Activated CD4-positive, alpha-beta T cell treated with anti-CD3 and anti-CD28 coated beads for 36 hours (primary cell): ENCODE measurements at regions of chr19 and their contacts with region 1.

Region 1: DNA sequence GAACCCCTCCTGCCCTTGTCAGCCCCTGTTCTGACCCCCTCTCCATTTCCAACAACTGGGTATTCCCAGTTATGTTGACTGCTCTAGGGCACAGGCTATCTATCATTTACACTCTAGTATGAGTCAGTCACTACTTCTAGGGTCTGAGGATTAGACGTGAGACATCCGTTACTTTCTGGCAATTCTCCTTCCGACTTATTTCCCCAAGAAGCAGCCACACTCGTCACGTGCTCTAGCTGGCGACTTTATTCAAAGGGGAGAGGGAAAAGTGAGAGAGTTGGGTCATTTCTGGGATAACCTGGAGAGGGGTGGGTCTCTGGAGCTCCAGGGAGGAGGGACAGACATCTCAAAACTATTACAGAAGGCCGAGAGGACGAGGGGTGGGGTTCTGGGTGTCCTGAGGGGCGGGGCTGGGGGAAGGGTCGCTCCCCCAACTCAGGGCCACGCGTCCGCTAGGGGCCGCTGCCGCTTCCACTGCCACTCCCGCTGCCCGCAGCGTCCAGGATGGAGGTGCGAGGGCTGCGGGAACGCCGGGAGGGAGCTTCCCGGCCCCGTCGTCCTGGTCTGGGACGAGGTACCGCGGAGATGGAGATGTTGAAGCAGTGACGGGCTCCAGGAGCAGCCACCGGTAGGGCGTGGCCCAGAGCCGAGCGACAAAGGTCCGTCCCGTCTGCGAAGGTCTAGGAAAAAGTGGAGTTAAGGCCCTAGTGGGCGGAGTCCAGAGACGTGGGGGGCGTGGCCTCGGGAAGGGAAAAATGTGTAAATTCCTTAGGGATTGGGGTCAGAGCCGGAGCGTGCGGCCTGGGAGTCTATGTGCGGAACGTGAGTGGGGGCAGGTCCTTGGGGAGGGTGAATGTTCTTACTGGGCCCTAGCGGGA is 8.9 kb downstream of the RTBDN start:
- DNase-seq: peak; percentile 65
- ATAC-seq: peak; percentile 50
- H3K4me3 Mint-ChIP-seq: no peak overlapping the region
- H3K27ac Mint-ChIP-seq: no peak overlapping the region
- H3K4me1 Mint-ChIP-seq: peaks cover 9% of the 10 kb centered on the region
- H3K27me3 Mint-ChIP-seq: peaks cover 35% of the 10 kb centered on the region

Region 2: GRCh38 chr19:12574036-12574435 is 251.5 kb before region 1 on chr19:
- CTCF ChIA-PET with region 1: no interaction called
- POLR2A ChIA-PET with region 1: no interaction called
- intact Hi-C with region 1: loop called in 1 of 2 experiments (anchors 10 kb)
- DNase-seq: no peak
- ATAC-seq: peak; percentile 33
- H3K4me3 Mint-ChIP-seq: no peak overlapping the region
- H3K27ac Mint-ChIP-seq: no peak overlapping the region
- H3K4me1 Mint-ChIP-seq: peaks cover 6% of the 10 kb centered on the region
- H3K27me3 Mint-ChIP-seq: no peaks in the 10 kb centered on the region

Region 3: GRCh38 chr19:12766051-12766521 is 59.4 kb before region 1 on chr19:
- CTCF ChIA-PET with region 1: interaction called, 10 read pairs
- POLR2A ChIA-PET with region 1: no interaction called
- intact Hi-C with region 1: no loop called
- DNase-seq: peak; percentile 94
- ATAC-seq: peak; percentile 83
- H3K4me3 Mint-ChIP-seq: peak overlapping the region; percentile 17
- H3K27ac Mint-ChIP-seq: no peak overlapping the region
- H3K4me1 Mint-ChIP-seq: peaks cover 10% of the 10 kb centered on the region
- H3K27me3 Mint-ChIP-seq: no peaks in the 10 kb centered on the region

Region 4: DNA sequence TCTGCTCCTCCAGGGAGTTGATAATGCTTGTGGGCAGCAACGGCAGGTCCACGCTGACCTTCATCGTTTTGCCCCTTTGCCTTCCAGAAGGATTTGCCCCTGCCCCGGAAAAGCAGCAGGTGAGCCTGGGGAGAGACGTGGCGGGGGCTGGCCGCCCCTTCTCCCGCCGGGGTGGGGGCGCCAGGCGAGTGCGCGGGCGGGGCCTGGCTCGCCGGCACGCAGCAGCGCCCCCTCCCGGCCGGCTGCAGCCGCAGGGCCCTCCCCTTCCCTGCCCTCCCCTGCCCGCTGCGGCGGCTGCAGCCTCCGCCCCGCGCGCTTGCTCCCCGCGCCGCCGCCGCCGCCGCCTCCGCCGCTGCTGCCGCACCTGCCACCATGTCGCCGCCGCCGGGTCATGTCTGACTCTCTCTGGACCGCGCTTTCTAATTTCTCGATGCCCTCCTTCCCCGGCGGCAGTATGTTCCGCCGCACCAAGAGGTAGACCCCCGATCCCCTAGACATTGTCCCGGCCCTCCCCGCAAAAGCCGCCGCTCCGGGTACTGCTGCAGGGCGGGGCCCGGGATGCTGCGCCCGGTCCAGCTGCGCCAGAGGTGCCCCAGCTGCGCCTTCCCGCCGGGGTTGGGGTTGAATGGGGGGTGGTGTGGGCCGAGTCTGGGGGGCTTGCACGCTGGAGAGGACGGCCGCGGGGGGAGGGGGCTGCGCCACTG is 12.8 kb after region 1 on chr19 and contains the start of gene MAST1:
- CTCF ChIA-PET with region 1: interaction called, 13 read pairs
- POLR2A ChIA-PET with region 1: no interaction called
- intact Hi-C with region 1: no loop called
- DNase-seq: peak; percentile 82
- ATAC-seq: peak; percentile 61
- H3K4me3 Mint-ChIP-seq: peak within 1 kb of the TSS; percentile 57
- H3K27ac Mint-ChIP-seq: no peak within 1 kb of the TSS
- H3K4me1 Mint-ChIP-seq: peaks cover 35% of the 10 kb centered on the region
- H3K27me3 Mint-ChIP-seq: peaks cover 70% of the 10 kb centered on the region
- total RNA-seq, gene MAST1: 1.8 to 2.7 TPM

Region 5: GRCh38 chr19:12859546-12859945 is 34.1 kb after region 1 on chr19:
- CTCF ChIA-PET with region 1: interaction called, 3 read pairs
- POLR2A ChIA-PET with region 1: no interaction called
- intact Hi-C with region 1: loop called in 1 of 2 experiments (anchors 5 kb)
- DNase-seq: no peak
- ATAC-seq: no peak
- H3K4me3 Mint-ChIP-seq: no peak overlapping the region
- H3K27ac Mint-ChIP-seq: no peak overlapping the region
- H3K4me1 Mint-ChIP-seq: no peaks in the 10 kb centered on the region
- H3K27me3 Mint-ChIP-seq: no peaks in the 10 kb centered on the region